ENCODE measurements at regions of chr17 and their contacts with region 1.

Region 1: DNA sequence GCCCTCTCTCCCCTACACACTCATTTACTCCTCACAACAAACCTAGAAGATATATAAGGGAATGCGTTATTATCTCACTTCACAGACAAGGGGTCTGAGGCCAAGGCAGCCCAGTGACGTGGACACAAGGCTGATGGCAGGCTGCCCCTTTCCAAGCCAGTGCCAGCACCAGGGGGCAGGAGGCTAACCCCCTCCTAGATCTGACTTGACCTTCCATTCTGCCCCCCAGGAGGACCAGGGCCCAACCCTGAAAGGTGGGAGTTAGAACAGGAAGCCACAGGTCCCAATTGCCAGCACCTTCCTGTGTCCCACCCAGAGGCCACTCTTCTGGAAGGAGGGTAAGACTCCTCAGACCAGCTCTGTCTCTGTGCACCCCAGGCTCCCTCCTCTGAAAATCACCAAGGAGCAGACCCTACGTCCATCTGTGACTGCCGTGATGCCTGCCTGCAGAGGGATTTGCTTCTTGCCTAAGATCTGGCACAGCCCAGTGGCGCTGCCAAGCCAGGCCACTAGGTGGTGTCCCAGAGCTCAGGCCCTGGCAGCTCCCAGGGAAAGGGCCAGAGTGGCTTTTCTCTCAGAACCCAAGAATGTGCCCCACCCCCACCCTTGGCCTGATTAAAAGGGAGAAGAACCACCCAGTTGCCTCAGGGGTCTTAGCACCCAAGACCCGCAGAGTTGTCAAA is 42.4 kb upstream of the MRPS23 start:
- DNase-seq: peak; percentile 72 to 90 (median 86)
- H3K4me3 ChIP-seq: no peak overlapping the region
- H3K27ac ChIP-seq: peak overlapping the region; percentile 35 to 73
- H3K4me1 ChIP-seq: peaks cover 50% of the 10 kb centered on the region
- H3K27me3 ChIP-seq: no peaks in the 10 kb centered on the region
- CTCF ChIP-seq: peak; percentile 59 to 84 (median 82)
- EP300 ChIP-seq: no peak
- POLR2A ChIP-seq: no peak

Region 2: DNA sequence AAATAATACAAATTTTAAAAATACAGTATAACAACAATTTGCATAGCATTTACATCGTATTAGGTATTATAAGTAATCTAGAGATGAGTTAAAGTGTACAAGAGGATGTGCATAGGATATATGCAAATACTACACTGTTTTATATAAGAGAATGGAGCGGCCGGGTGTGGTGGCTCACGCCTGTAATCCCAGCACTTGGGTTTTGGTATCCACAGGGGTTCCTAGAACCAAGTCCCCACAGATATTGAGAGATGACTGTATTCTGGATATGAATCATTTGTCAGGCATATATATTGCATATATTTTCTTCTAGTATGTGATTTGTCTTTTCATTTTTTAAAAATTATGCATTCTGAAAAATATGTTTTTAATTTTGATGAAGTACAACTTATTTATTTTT is 713.4 kb before region 1 on chr17:
- intact Hi-C with region 1: loop called in 1 of 4 experiments (anchors 5 kb)
- DNase-seq: no peak
- H3K4me3 ChIP-seq: no peak overlapping the region
- H3K27ac ChIP-seq: no peak overlapping the region
- H3K4me1 ChIP-seq: no peaks in the 10 kb centered on the region
- H3K27me3 ChIP-seq: no peaks in the 10 kb centered on the region
- CTCF ChIP-seq: no peak
- EP300 ChIP-seq: no peak
- POLR2A ChIP-seq: no peak

Region 3: DNA sequence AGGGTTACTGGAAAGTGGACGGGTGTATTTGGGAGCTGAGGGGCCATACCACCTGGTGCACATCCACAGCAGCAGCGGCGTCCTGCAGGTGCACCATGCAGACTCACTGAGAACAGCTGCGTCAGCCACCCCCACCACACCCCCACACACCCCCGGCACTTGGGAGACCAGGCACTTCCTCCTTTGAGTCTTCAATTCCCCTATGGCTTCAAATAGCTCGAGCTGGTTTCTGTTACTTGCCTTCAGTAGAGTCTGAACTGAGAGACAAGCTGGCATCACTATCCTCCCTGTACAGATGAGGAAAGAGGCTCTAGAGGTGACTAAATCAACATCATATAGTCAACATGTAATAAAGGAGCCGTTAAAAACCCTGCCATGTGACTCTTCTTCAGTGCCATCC is 47.5 kb after region 1 on chr17:
- intact Hi-C with region 1: loop called in 2 of 4 experiments (anchors 5 to 10 kb)
- DNase-seq: no peak
- H3K4me3 ChIP-seq: no peak overlapping the region
- H3K27ac ChIP-seq: no peak overlapping the region
- H3K4me1 ChIP-seq: peaks cover 12% of the 10 kb centered on the region
- H3K27me3 ChIP-seq: no peaks in the 10 kb centered on the region
- CTCF ChIP-seq: no peak
- EP300 ChIP-seq: no peak
- POLR2A ChIP-seq: no peak

Region 4: DNA sequence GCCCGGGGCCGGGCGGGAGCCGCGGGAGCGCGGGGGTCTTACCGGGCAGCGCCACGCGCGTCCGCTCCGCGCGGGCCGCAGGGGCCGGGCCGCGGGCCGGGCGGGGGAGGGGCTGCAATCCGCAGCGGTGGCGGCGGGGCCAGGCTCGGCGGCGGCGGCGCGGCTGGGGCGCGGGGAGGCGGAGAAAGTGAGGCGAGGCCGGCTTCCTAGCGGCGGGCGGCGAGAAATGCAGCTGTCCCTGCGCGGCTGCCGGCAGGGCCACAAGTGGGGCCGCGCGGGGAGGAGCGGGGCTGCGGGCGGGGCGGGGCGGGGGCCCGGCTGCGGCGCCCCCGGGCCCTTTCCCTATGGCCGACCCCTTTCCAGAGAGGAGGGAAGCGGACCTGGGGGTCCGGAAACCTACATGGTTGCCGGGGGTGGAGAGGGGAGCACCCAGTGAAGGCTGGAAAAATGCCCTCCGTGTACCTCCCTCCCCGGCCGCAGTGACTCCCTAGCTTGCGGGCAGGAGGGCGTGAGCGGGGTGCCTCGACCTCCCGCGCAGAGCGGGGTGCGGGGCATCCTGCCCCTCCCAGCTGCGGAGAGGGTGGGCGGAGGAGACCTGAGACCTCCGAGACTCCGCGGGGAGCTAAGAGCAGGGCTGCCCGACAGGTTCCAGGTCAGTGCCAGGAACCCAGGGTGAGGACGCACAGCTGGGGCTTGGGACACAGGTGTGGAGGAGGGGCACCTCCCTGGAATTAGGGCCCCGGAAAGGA is 63.1 kb after region 1 on chr17 and contains the start of gene CUEDC1:
- intact Hi-C with region 1: loop called in 1 of 4 experiments (anchors 10 kb)
- DNase-seq: peak; percentile 73 to 85 (median 83)
- H3K4me3 ChIP-seq: peak within 1 kb of the TSS; percentile 70
- H3K27ac ChIP-seq: peak within 1 kb of the TSS; percentile 72 to 83
- H3K4me1 ChIP-seq: peaks cover 6% of the 10 kb centered on the region
- H3K27me3 ChIP-seq: no peaks in the 10 kb centered on the region
- CTCF ChIP-seq: peak in 2 of 3 donors; percentile 34 to 36
- EP300 ChIP-seq: no peak
- POLR2A ChIP-seq: no peak
- total RNA-seq, gene CUEDC1: 6.7 to 30.2 (median 22.9) TPM

Region 5: DNA sequence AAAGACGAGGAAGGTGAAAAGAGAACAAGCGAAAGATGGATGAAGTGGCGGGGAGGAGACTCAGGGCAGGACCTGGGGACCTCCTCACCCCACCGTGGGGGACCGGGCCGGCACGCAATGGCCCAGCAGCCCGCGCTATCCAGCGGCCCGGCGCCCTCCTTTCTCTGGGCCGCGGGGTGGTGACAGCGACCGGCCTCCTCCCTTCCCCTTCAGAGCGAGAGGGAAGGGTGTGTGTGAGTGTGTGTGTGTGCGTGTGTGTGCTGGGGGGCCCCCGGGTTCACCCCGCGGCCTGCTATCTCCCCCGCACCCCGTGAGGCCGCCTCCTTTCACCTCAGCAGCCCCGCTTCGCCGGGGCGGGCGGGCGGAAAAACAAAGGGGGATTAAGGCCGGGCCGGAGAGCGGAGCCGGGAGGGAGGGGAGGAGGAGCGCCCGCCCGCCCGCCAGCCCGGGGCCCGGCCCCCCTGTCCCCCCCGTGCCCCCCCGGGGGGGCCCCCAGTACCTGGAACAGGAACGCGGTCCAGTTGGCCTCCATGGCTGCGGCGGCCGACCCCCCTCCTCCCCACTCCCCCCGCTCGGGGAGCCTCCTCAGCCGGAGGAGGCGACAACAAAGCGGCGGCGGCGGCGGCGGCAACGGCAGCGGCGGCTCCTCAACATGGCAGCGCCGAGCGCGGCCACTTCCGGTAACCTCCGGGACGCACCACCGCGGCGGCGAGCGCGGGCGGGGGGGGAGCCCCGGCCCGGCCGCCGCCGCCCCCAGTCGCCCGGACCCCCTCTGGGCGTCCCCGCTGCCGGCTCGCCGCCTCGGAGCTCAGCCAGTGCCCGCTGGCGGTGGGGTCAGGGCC is 95.5 kb after region 1 on chr17 and contains the start of gene VEZF1:
- intact Hi-C with region 1: loop called in 1 of 4 experiments (anchors 5 kb)
- DNase-seq: peak; percentile 79 to 90 (median 84)
- H3K4me3 ChIP-seq: peak within 1 kb of the TSS; percentile 86
- H3K27ac ChIP-seq: peak within 1 kb of the TSS; percentile 93 to 95
- H3K4me1 ChIP-seq: peaks cover 8% of the 10 kb centered on the region
- H3K27me3 ChIP-seq: no peaks in the 10 kb centered on the region
- CTCF ChIP-seq: no peak
- EP300 ChIP-seq: no peak
- POLR2A ChIP-seq: peak; percentile 17
- total RNA-seq, gene VEZF1: 58.6 to 83.5 (median 72.4) TPM

Region 6: GRCh38 chr17:58232707-58233156 is 340.4 kb after region 1 on chr17:
- intact Hi-C with region 1: no loop called
- DNase-seq: no peak
- H3K4me3 ChIP-seq: no peak overlapping the region
- H3K27ac ChIP-seq: no peak overlapping the region
- H3K4me1 ChIP-seq: no peaks in the 10 kb centered on the region
- H3K27me3 ChIP-seq: no peaks in the 10 kb centered on the region
- CTCF ChIP-seq: no peak
- EP300 ChIP-seq: no peak
- POLR2A ChIP-seq: no peak